Right ventricle myocardium superior (tissue), 1 donor: ENCODE measurements at regions of chr6 and their contacts with region 1.

Region 1: DNA sequence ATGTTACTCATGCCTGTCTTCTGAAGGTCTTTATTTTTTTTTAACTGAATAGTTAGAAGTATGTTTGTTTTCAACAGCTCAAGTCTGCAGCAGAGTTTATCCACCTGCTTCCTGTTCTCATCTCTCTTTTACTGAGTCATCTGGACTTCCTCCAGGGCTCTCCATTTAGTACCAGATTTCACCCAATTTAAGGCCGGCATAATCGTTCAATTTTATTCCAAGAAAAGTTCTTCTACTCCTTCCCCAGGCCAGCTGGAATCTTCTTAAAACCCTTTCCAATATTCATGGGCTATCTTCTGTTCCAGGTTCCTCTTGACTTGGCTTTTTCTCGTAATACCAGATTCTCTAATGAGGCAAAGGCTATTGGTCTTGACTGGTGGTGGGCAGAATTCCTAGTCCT is 79.0 kb upstream of the LAMA2 start:
- DNase-seq: no peak
- ATAC-seq: peak; percentile 77

Region 2: DNA sequence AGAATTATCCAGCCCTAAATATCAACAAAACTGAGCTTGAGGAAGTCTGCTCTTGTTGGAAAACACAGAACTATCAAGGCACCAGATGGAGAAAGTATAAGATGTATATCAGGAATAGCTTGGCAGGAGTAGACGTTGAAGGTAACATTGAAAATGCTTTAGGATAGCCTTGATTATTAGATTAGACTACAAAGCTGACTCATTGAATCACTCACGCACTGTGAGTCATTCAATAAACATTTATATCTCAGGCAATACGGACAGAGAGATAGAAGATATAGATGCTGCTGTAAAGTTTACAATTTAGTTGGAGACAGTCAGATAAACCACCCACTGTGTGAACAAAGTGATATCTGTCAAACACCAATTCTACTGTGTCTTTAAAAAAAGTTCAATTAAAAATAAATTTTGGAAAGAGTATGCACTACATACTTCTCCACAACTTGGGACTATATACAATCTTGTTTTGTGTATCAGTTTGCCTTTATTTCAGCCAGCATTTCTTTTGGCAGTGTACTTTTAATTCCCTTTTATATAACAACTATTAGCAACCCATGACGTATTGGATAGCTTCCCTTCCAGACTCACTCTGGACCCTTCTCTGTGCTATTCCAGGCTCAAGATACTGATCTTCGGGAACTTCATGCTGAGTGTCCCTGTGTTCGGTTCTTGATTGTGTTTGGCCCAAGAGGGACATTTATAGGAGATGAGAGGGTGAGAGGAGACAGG is 107.1 kb before region 1 on chr6:
- intact Hi-C with region 1: no loop called
- DNase-seq: no peak
- ATAC-seq: peak; percentile 22

Region 3: GRCh38 chr6:128932061-128932460 is 128.2 kb after region 1 on chr6:
- intact Hi-C with region 1: no loop called
- DNase-seq: no peak
- ATAC-seq: no peak

Region 4: GRCh38 chr6:129251669-129252376 is 447.9 kb after region 1 on chr6:
- intact Hi-C with region 1: loop called (anchors 10 kb)
- DNase-seq: no peak
- ATAC-seq: peak; percentile 63